Activated B cell treated with CpG ODN at 0.5 μM for 24 hours (primary cell): ENCODE measurements at regions of chr19 and their contacts with region 1.

Region 1: DNA sequence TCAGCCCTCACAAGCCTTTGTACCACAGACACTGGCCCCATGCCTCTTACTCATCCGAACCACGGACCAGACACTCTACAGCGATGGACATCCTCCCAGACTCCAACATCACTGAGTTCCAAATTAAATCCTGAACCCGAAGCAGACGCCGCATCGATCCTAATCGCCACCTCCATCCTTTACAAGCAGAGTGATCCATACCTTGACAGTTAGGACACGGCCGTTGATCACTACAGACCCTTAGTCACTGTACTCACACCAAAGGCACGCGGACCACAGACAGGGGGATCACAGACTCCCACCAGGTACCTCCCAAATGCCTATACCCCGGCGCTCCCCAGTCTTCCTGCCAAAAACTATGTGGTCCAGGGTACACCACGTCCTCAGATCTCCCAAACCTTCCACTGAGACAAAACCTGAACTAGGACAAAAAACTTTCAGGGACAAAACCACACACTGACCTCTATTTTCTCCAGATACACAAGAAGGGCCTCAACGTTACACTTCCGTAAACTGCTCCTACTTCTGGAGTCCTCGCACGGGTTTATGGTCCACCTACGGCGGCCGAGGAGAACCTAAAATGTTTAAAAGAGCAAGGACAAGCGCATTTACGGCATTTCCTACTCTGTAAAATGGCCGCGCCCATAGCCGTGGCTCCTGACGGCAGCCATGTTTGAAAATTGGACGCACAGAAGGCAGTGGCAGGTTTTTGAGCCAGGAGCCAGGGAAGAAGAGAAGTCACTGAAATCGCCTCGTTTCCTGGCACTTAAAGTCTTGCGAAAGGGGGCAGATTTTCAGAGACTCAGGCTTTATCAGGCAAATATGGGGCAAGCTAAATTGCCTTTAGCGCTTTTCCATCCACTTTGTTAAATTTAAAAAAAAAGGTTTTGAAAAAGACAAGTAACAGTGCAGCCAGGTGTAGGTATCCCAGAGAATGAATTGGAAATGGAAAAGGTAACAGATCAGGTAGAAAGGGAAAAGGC is at the start of gene ZNF350:
- DNase-seq: peak; percentile 72
- ATAC-seq: peak; percentile 98
- H3K4me3 Mint-ChIP-seq: peak within 1 kb of the TSS; percentile 97
- H3K27ac Mint-ChIP-seq: peak within 1 kb of the TSS; percentile 93
- H3K4me1 Mint-ChIP-seq: peaks cover 20% of the 10 kb centered on the region
- H3K27me3 Mint-ChIP-seq: no peaks in the 10 kb centered on the region
- CTCF ChIP-seq: no peak
- total RNA-seq, gene ZNF350: 32.2 and 35.2 TPM in 2 replicates

Region 2: GRCh38 chr19:51887522-51888498 is 98.8 kb before region 1 on chr19 and contains the start of gene ZNF577:
- CTCF ChIA-PET with region 1: no interaction called
- POLR2A ChIA-PET with region 1: no interaction called
- intact Hi-C with region 1: loop called (anchors 1 kb)
- DNase-seq: peak; percentile 44
- ATAC-seq: peak; percentile 93
- H3K4me3 Mint-ChIP-seq: peak within 1 kb of the TSS; percentile 94
- H3K27ac Mint-ChIP-seq: peak within 1 kb of the TSS; percentile 89
- H3K4me1 Mint-ChIP-seq: peaks cover 5% of the 10 kb centered on the region
- H3K27me3 Mint-ChIP-seq: no peaks in the 10 kb centered on the region
- CTCF ChIP-seq: no peak
- total RNA-seq, gene ZNF577: 13.2 and 13.9 TPM in 2 replicates

Region 3: DNA sequence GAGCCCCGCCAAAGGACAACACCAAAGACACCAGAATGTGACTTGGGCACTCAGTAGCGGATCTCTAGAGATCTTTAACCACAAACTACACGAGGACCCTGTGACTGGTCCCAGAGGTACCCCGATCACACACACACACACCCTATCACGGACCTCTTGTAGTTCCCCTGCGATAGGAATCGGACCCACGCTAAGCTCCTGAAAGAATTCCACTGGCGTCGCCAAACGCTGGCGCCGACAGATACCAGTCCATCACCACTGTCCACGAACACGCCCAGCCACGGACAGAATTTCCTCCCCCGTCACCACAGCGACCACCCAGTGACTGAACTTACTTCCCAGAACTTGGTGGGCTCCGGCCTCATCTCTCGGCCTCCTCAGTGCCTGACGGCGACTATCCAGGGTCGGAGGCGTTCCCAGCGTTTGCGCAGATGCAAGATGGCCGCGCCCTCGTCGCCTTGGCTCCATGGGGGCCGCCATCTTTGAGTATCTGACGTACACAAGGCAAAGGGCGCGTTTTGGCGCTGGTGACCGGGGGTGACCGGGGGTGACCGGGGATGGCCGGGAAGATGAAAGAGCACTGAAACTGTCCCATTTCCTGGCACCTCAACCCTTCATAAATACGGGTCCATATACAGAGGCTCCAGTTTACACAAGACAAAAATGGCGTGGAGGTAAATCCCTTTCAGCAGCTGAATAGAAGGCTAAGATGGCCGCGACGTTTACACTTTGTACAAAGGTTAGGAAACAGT is 21.4 kb after region 1 on chr19 and contains the start of gene ZNF615:
- CTCF ChIA-PET with region 1: no interaction called
- POLR2A ChIA-PET with region 1: no interaction called
- intact Hi-C with region 1: loop called (anchors 1 kb)
- DNase-seq: peak; percentile 85
- ATAC-seq: peak; percentile 94
- H3K4me3 Mint-ChIP-seq: peak within 1 kb of the TSS; percentile 93
- H3K27ac Mint-ChIP-seq: peak within 1 kb of the TSS; percentile 99
- H3K4me1 Mint-ChIP-seq: peaks cover 18% of the 10 kb centered on the region
- H3K27me3 Mint-ChIP-seq: no peaks in the 10 kb centered on the region
- CTCF ChIP-seq: no peak
- total RNA-seq, gene ZNF615: 9.1 and 13.5 TPM in 2 replicates

Region 4: GRCh38 chr19:52048555-52049501 is 62.2 kb after region 1 on chr19 and contains the start of gene ZNF432:
- CTCF ChIA-PET with region 1: no interaction called
- POLR2A ChIA-PET with region 1: interaction called, 3 read pairs
- intact Hi-C with region 1: loop called (anchors 1 kb)
- DNase-seq: peak; percentile 82
- ATAC-seq: peak; percentile 88
- H3K4me3 Mint-ChIP-seq: peak within 1 kb of the TSS; percentile 100
- H3K27ac Mint-ChIP-seq: peak within 1 kb of the TSS; percentile 99
- H3K4me1 Mint-ChIP-seq: peaks cover 19% of the 10 kb centered on the region
- H3K27me3 Mint-ChIP-seq: no peaks in the 10 kb centered on the region
- CTCF ChIP-seq: no peak
- total RNA-seq, gene ZNF432: 18.1 and 18.4 TPM in 2 replicates

Region 5: GRCh38 chr19:53520550-53521372 is 1534.2 kb after region 1 on chr19:
- CTCF ChIA-PET with region 1: no interaction called
- POLR2A ChIA-PET with region 1: no interaction called
- intact Hi-C with region 1: loop called (anchors 2 kb)
- DNase-seq: peak; percentile 71
- ATAC-seq: peak; percentile 97
- H3K4me3 Mint-ChIP-seq: peak overlapping the region; percentile 94
- H3K27ac Mint-ChIP-seq: peak overlapping the region; percentile 87
- H3K4me1 Mint-ChIP-seq: peaks cover 16% of the 10 kb centered on the region
- H3K27me3 Mint-ChIP-seq: no peaks in the 10 kb centered on the region
- CTCF ChIP-seq: no peak